Tibial artery (tissue), 4 donors: ENCODE measurements at regions of chr1 and their contacts with region 1.

Region 1: DNA sequence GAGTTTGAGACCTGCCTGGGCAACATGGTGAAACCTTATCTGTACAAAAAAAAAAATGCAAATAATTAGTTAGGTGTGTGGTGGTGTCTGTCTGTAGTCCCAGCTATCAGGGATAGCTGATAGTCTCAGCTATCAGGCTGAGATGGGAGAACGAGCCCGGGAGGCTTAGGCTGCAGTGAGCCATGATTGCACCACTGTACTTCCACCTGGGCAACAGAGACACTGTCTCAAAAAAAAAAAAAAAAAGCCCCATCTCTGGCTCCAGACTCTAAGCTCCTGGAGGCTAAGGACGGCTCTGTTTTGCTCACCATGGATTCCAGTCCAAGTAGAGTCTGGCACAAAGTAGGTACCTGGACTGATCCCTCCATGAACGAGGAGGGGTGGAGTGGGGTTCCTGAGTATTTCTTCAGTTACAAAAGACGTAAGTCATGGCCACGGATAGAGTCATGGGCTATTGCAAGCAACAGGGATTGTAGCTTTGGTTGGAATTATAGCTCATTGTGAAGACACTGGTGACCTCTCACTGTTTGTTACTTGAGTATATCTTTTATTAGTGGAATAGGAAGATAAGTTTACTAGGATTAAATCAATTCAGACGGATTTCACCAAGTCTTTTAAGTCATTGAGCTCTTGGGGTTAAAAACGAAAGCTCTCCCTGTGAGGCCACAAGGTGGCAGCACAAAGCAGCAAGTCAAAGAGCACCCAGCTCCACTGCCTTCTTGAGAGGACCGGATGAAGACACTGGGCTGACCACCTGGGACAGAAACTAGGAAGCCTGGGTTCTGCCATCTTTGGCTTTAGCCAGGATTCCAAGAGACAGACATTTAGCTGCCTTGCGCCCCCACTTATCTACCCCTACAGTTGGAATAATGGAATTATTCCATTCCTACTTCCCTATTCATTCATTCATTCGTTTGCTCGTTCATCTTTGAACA is 35.6 kb upstream of the TMEM61 start:
- DNase-seq: peak; percentile 61 to 76
- H3K4me3 ChIP-seq: no peak overlapping the region
- H3K27ac ChIP-seq: no peak overlapping the region
- H3K4me1 ChIP-seq: peaks cover 0 to 3% (median 0%) of the 10 kb centered on the region in 4 donors
- H3K27me3 ChIP-seq: no peaks in the 10 kb centered on the region
- CTCF ChIP-seq: peak; percentile 70 to 74

Region 2: DNA sequence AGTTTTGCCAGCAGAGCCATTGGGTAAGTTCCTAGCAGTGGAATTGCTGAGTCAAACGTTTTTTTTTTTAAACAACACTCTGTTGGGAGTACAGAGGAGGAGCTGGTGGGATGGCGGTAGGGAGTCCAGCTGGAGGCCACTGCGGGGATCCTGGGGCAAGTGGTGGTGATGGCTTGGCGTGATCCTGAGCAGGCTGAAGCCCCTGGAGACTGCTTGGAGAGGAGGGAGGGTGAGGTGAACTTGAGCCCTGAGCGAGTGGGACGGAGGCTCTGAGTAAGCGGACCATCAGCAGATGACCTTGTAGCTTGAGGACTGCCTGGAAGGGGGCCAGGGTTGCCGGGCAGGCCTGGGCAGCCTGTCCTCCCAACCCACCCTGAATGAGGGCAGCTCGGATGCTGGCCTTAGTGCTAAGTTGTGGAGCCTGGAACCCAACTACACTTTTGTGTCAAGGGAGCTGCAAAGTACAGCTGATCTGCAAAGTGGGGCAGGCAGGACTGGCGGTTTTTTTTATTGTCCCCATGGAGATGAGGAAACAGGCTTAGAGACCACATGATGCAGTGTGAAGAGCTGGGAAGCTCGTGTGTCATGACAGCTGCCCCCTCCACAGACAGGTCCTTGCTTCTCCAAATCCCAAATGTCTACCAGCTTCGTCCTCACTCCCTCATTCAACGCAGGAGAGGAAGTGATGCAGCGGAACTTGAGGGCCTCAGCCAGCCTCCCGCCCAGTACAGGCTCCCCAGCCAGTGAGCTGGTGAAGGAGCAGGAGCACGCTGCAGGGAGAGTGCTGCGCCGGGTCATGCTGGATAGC is 724.7 kb before region 1 on chr1:
- intact Hi-C with region 1: no loop called
- DNase-seq: peak in 1 of 2 donors; percentile 83
- H3K4me3 ChIP-seq: no peak overlapping the region
- H3K27ac ChIP-seq: peak overlapping the region; percentile 25 to 63
- H3K4me1 ChIP-seq: peaks cover 0 to 30% (median 18%) of the 10 kb centered on the region in 4 donors
- H3K27me3 ChIP-seq: no peaks in the 10 kb centered on the region
- CTCF ChIP-seq: no peak

Region 3: DNA sequence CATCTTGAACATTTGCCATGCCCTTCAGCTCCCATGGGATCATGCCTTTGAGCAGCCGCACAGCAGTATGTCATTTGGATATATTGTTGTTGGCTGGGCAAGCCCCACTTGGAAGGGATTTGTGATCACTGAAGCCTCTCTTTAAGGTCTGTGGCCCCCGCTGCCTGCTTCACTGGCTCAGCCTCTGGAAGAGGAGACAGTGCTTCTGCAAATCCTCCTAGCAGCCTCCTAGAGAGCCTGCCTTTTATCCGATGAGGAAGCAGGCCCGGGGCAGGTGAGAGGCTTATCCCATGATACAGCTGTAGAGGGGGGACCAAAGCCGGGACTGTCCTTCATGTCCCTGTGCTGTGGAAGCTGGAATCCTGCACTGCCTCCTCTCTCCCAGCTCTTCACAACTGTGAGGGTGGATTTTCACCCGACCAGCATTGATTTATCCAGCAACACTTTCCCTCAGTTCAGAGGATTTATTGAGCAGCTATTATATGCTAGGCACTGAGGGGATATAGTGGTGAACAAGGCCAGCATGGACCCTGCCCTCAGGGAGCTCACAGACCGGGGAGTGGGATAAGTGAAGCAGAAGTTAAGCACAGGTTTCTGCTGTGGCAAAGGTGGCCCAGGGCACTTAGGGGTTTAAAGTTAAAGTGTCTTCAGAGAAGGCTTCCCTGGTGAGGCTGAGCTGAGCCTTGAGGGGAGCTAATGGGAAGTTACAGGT is 39.4 kb after region 1 on chr1:
- intact Hi-C with region 1: no loop called
- DNase-seq: no peak
- H3K4me3 ChIP-seq: no peak overlapping the region
- H3K27ac ChIP-seq: no peak overlapping the region
- H3K4me1 ChIP-seq: peaks cover 0 to 38% (median 15%) of the 10 kb centered on the region in 4 donors
- H3K27me3 ChIP-seq: peaks cover 0 to 13% of the 10 kb centered on the region in 2 donors
- CTCF ChIP-seq: no peak

Region 4: GRCh38 chr1:54996869-54997710 is 52.2 kb after region 1 on chr1:
- intact Hi-C with region 1: loop called (anchors 1 kb)
- DNase-seq: no peak
- H3K4me3 ChIP-seq: no peak overlapping the region
- H3K27ac ChIP-seq: no peak overlapping the region
- H3K4me1 ChIP-seq: peaks cover 0 to 12% (median 7%) of the 10 kb centered on the region in 4 donors
- H3K27me3 ChIP-seq: peaks cover 0 to 46% of the 10 kb centered on the region in 2 donors
- CTCF ChIP-seq: no peak

Region 5: GRCh38 chr1:55107101-55107500 is 162.2 kb after region 1 on chr1:
- intact Hi-C with region 1: no loop called
- DNase-seq: no peak
- H3K4me3 ChIP-seq: no peak overlapping the region
- H3K27ac ChIP-seq: no peak overlapping the region
- H3K4me1 ChIP-seq: no peaks in the 10 kb centered on the region
- H3K27me3 ChIP-seq: no peaks in the 10 kb centered on the region
- CTCF ChIP-seq: no peak

Region 6: DNA sequence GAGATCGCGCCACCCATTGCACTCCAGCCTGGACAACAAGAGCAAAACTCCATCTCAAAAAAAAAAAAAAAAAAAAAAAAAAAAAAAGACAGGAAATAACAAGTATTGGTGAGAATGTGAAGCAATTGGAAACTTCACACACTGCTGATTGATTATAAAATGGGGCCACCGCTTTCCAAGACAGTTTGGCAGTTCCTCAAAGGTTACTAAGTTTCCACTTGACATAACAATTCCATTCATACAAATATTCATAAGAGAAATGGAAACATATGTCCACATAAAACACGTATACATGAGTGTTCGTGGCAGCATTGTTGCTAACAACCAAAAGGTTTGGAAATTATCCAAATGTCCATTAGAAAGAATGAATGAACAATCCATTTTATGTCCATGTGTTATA is 244.0 kb after region 1 on chr1:
- intact Hi-C with region 1: no loop called
- DNase-seq: no peak
- H3K4me3 ChIP-seq: no peak overlapping the region
- H3K27ac ChIP-seq: no peak overlapping the region
- H3K4me1 ChIP-seq: peaks cover 0 to under 1% (median 0%) of the 10 kb centered on the region in 4 donors
- H3K27me3 ChIP-seq: no peaks in the 10 kb centered on the region
- CTCF ChIP-seq: no peak